Transverse colon (tissue), 4 donors: ENCODE measurements at regions of chr6 and their contacts with region 1.

Region 1: GRCh38 chr6:10747251-10747972 is at the start of gene TMEM14B:
- DNase-seq: peak; percentile 100
- H3K4me3 ChIP-seq: peak within 1 kb of the TSS; percentile 64 to 89 (median 82)
- H3K27ac ChIP-seq: peak within 1 kb of the TSS; percentile 82 to 93 (median 90)
- H3K4me1 ChIP-seq: peaks cover 15 to 27% (median 22%) of the 10 kb centered on the region in 4 donors
- H3K27me3 ChIP-seq: no peaks in the 10 kb centered on the region
- CTCF ChIP-seq: peak in 1 of 5 experiments; percentile 10
- EP300 ChIP-seq: peak; percentile 1
- POLR2A ChIP-seq: peak; percentile 92
- total RNA-seq, gene TMEM14B: 16.5 to 57.9 (median 48.7) TPM

Region 2: DNA sequence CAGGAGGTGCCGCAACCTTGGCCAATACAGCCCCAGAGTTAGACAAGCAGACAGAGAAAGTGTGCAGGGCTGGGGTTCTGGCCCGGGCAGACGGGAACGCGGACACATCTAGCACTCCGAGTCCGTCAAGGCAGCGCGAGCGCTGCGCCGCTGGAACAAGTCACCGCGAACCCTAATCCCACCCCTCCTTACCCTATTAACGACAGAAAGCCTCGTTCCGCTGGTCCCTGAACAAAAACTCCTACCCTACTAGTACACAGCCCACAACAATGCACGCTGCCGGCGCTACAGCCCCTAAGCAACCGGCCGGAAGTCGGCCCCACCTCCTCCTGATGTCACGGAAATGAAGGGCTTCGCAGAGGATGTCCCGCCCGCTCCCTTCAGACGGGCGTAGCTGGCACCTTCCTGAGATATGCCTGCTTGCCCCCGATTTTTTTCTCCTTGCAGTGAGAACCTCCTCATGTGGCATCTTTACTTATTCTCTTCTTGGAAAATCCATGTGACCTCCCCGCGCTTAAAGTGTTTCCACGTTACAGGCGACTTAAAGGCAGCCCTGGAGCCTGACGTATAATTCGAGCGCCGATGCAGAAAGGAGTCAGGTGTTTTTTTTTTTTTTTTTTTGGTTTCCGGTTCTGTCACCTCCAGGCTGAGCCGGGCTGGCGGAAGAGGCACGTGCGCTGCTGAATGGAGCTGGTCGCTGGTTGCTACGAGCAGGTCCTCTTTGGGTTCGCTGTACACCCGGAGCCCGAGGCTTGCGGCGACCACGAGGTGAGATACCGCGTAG is 52.9 kb before region 1 on chr6 and contains the starts of genes C6orf52 and PAK1IP1:
- in situ Hi-C with region 1: loop called in 1 of 4 experiments (anchors 10 kb)
- intact Hi-C with region 1: loop called (anchors 10 kb)
- DNase-seq: peak; percentile 95
- H3K4me3 ChIP-seq: peak within 1 kb of the TSS; percentile 76 to 93 (median 78)
- H3K27ac ChIP-seq: peak within 1 kb of the TSS; percentile 90 to 97 (median 93)
- H3K4me1 ChIP-seq: peaks cover 11 to 25% (median 21%) of the 10 kb centered on the region in 4 donors
- H3K27me3 ChIP-seq: no peaks in the 10 kb centered on the region
- CTCF ChIP-seq: no peak
- EP300 ChIP-seq: no peak
- POLR2A ChIP-seq: peak; percentile 92
- total RNA-seq, gene C6orf52: not detected
- total RNA-seq, gene PAK1IP1: 5.6 to 6.4 (median 6.0) TPM

Region 3: GRCh38 chr6:10722820-10723566 is 24.4 kb before region 1 on chr6 and contains the start of gene TMEM14C:
- in situ Hi-C with region 1: no loop called
- intact Hi-C with region 1: loop called (anchors 2 kb)
- DNase-seq: peak; percentile 99
- H3K4me3 ChIP-seq: peak within 1 kb of the TSS; percentile 48 to 85 (median 78)
- H3K27ac ChIP-seq: peak within 1 kb of the TSS; percentile 88 to 95 (median 94)
- H3K4me1 ChIP-seq: peaks cover 0 to 30% (median 18%) of the 10 kb centered on the region in 4 donors
- H3K27me3 ChIP-seq: no peaks in the 10 kb centered on the region
- CTCF ChIP-seq: no peak
- EP300 ChIP-seq: no peak
- POLR2A ChIP-seq: peak; percentile 94
- total RNA-seq, gene TMEM14C: 9.7 to 125 (median 60.0) TPM